PC-9 (cell line): ENCODE measurements at regions of chr1 and their contacts with region 1.

Region 1: DNA sequence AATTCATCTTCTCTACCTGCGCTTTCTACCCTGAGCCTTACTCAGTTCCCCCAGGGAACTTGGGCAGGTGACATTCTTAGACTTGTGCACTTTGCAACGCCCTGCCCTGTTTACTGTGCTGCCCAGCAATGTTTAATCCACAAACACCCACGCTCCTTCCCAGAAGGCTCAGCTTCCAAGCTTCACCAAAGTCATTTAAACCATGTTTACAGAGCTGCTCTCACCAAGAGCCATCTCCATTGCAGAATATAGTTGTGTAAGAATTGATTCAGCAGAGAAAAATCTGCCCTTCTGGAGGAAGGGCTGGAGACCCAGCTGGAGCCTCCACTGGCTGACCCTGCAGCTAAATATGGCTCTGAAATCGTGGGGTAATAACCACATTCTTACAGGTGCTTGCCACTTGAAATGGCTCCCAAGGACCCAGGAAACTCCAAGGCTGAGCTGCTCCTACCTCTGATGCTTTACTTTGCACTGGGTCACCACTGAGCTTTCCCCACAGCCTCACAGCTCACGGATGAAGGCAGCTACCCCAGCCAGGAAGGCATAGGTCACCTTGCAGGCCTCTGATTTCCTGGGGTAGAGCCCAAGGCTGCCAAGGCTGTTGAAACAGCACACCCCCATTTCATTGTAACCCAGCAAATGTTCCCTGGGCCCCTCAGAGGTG is 8.7 kb downstream of the CAPN2 start:
- DNase-seq: peak; percentile 60 to 99
- H3K4me3 ChIP-seq: no peak overlapping the region
- H3K27ac ChIP-seq: peak overlapping the region; percentile 92
- H3K4me1 ChIP-seq: peaks cover 87% of the 10 kb centered on the region
- H3K27me3 ChIP-seq: no peaks in the 10 kb centered on the region
- CTCF ChIP-seq: no peak

Region 2: DNA sequence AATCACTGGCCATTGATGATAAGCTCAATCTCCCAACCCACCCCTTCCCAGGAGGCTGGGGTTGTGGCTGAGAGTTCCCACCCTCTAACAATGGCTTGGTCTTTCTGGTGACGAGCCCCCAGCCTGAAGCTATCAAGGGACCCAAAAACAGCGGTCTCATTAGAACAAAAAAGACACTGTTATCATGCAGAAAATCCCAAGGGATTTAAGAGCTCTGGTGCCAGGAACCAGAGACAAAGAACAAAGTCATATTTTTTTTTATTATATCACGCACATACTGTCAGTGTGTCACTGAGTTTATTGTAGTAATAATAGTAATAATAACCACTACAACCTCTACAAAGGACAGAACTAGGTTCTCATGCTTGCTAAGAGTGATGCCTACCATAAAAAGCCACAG is 283.9 kb before region 1 on chr1:
- CTCF ChIA-PET with region 1: no interaction called
- POLR2A ChIA-PET with region 1: no interaction called
- intact Hi-C with region 1: no loop called
- DNase-seq: no peak
- H3K4me3 ChIP-seq: no peak overlapping the region
- H3K27ac ChIP-seq: no peak overlapping the region
- H3K4me1 ChIP-seq: no peaks in the 10 kb centered on the region
- H3K27me3 ChIP-seq: peaks cover 25% of the 10 kb centered on the region
- CTCF ChIP-seq: no peak

Region 3: DNA sequence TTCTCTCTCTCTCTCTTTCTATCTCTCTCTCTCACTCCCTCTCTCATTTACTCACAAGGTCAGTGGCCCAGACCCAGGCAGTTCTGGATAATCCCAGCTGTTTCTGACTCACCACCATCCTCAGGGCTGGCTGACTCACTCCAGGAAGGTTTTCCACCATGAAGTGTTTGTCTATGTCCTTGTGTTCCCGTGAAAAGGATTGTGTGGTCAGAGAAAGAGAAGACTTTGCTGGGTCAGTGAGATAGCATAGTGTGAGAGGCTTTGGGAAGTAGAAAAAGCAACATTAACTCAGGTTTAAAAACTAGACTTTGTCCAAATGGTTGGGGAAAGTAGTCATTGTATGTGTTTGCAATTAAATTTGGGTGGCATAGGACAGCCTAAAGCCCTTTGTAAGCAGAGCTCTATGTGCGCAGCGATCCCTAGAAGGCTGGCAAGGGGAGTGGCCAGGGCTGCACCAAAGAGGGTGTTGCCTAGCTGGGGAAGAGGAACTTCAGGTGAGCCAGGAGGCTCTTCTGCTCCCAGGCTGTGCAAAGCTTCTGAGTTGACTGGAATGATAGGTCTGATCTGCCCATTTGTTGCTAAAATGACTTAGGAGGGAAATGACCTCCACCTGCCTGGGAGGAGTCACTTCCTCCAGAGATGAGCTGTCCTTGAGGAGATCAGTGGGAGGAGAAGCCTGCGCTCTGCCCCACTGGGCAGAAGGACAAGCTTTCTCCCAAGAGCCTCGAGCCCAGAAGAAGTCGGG is 13.6 kb before region 1 on chr1:
- CTCF ChIA-PET with region 1: interaction called, 5 read pairs
- POLR2A ChIA-PET with region 1: interaction called, 11 read pairs
- intact Hi-C with region 1: no loop called
- DNase-seq: peak; percentile 86 to 96
- H3K4me3 ChIP-seq: peak overlapping the region; percentile 45; the same call in 1 of the 2 replicates
- H3K27ac ChIP-seq: peak overlapping the region; percentile 96
- H3K4me1 ChIP-seq: peaks cover 94% of the 10 kb centered on the region
- H3K27me3 ChIP-seq: no peaks in the 10 kb centered on the region
- CTCF ChIP-seq: no peak

Region 4: DNA sequence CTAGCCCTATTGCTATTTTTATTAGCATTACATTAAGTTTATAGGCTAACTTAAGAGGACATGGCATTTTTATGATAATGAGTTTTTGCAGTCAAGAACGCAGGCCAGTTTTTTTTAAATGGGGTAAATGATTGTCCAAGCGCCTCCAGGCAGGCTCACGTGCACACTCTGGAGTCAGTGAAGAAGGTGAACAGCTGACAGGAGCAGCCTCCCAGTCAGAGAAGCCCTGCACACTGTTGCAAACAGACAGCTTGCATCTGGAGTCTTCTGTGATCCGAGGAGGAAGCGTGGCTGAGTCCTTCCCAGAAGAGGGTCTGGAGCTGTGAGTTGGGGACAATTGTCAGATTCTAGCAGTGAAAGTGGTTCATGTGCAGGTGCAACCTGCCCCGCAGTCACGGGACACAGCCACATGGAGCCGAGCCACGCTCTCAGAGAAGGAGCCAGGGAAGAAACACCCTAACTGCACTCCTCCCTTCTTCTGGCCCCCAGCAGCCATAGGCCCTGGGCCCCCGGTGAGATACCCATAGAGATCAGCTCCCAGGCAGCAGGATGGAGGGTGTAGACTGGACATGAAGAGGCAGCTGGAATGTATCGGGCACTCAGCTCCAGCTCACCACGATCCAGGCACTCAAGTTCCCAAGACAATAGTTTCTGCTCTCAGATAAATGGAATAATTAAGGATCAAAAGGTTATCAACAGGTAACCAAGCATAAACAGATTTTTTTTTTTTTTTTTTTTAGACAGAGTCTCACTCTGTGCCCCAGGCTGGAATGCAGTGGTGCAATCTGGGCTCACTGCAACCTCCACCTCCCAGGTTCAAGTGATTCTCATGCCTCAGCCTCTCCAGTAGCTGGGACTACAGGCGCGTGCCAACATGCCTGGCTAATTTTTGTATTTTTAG is 17.7 kb after region 1 on chr1:
- CTCF ChIA-PET with region 1: interaction called, 13 read pairs
- POLR2A ChIA-PET with region 1: interaction called, 11 read pairs
- intact Hi-C with region 1: no loop called
- DNase-seq: peak; percentile 46 to 73
- H3K4me3 ChIP-seq: no peak overlapping the region
- H3K27ac ChIP-seq: peak overlapping the region; percentile 73
- H3K4me1 ChIP-seq: peaks cover 46% of the 10 kb centered on the region
- H3K27me3 ChIP-seq: no peaks in the 10 kb centered on the region
- CTCF ChIP-seq: no peak

Region 5: DNA sequence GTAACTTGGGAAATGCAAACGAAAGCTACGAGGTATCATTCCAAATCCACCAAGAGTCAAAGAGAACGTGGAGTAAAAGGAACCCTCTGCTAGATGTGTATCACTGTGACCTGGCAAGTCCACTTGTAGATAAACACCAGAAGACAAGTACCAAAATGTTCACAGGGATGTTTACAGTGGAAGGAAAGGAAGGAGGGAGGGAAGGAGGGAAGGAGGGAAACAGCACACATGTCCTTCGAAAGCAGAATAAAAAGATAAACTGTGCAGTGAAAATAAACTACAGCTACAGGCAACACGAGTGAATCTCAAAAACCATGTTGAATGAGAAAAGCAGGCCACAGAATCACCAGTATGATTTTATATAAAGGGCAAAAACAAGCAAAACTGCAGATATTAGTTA is 64.7 kb after region 1 on chr1:
- CTCF ChIA-PET with region 1: no interaction called
- POLR2A ChIA-PET with region 1: no interaction called
- intact Hi-C with region 1: no loop called
- DNase-seq: no peak
- H3K4me3 ChIP-seq: no peak overlapping the region
- H3K27ac ChIP-seq: no peak overlapping the region
- H3K4me1 ChIP-seq: no peaks in the 10 kb centered on the region
- H3K27me3 ChIP-seq: no peaks in the 10 kb centered on the region
- CTCF ChIP-seq: no peak

Region 6: DNA sequence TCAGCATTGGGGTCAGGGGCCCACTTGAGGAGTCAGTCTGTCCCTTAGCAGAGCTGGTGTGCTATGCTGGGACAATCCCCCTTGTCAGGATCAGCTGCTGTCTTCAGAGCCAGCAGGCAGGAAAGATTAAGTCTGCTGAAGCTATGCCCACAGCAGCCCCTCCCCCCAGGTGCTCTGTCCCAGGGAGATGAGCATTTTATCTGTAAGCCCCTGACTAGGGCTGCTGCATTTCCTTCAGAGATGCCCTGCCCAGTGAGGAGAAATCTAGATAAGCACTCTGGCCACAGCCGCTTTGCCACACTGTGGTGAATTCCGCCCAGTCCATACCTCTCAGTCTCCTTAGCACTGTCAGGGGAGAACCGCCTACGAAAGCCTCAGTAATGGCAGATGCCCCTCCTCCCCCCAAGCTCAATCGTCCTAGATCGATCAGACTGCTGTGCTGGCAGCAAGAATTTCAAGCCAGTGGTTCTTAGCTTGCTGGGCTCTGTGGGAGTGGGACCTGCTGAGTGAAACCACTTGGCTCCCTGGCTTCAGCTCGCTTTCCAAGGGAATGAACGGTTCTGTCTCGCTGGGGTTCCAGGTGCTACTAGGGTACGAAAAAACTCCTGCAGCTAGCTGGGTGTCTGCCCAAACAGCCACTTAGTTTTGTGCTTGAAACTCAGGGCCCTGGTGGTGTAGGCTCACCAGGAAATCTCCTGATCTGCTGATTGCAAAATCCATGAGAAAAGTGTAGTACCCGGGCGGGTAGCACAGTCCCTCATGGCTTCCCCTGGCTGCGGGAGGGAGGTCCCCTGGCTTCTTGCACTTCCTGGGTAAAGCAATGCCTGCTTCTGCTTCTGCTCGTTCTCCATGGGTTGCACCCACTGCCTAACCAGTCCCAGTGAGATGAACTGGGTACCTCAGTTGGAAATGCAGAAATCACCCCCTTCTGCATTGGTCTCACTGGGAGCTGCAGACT is 149.8 kb after region 1 on chr1:
- CTCF ChIA-PET with region 1: no interaction called
- POLR2A ChIA-PET with region 1: interaction called, 13 read pairs
- intact Hi-C with region 1: no loop called
- DNase-seq: no peak
- H3K4me3 ChIP-seq: no peak overlapping the region
- H3K27ac ChIP-seq: no peak overlapping the region
- H3K4me1 ChIP-seq: 0 out of 2 replicates have a peak, but pooled peaks cover 10% of the 10 kb centered on the region
- H3K27me3 ChIP-seq: no peaks in the 10 kb centered on the region
- CTCF ChIP-seq: no peak